Psoas muscle (tissue), 8 donors: ENCODE measurements at regions of chr15 and their contacts with region 1.

Region 1: DNA sequence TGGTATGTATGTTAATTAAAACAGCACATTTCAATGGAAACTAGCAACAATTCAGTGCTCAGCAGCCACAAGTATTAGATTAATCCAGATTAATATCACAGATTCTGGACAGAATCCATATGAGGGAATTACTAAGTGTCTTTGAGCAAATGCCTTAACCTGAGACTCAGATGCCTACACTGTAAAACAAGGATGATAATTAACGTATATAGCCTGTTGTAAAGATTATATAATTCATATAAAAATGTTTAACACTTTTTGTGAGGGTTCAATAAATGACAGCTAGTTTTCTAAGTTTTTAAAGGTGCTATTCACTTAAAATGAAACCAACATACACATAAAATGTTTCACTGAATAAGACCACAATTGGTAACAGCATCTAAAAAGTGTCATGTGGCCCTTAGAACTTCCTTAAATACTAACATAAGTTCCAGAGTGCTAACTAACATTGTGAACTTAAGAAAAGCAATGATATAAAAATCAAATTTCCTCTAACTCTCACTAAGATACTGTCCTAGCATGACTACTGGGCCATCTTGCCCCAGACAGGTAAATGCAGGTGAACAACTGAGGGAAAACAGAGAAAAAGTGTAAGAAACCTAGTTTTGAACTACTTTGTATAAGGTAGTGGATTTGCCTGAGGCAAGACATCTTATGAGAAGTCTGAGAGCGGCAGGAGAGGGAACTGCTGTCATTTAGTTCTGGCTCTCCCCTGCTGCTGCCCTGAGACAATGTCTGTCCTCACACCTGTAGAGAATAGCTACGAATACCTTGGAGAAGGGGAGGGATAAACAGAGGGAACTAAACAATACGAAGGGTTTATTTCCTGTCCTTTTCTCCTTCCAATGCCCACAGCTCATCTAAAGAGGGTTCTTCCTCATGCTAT is 151.3 kb downstream of the ADAM10 start:
- DNase-seq: no peak
- ATAC-seq: no peak
- H3K4me3 ChIP-seq: no peak overlapping the region
- H3K27ac ChIP-seq: no peak overlapping the region
- H3K4me1 ChIP-seq: no peaks in the 10 kb centered on the region
- H3K27me3 ChIP-seq: no peaks in the 10 kb centered on the region
- CTCF ChIP-seq: no peak

Region 2: GRCh38 chr15:58535894-58536293 is 62.3 kb before region 1 on chr15:
- intact Hi-C with region 1: loop called in 1 of 2 experiments (anchors 10 kb)
- DNase-seq: no peak
- ATAC-seq: no peak
- H3K4me3 ChIP-seq: no peak overlapping the region
- H3K27ac ChIP-seq: no peak overlapping the region
- H3K4me1 ChIP-seq: peaks cover 8% of the 10 kb centered on the region
- H3K27me3 ChIP-seq: no peaks in the 10 kb centered on the region
- CTCF ChIP-seq: no peak